Testis (tissue), 5 donors: ENCODE measurements at regions of chr1 and their contacts with region 1.

Region 1: GRCh38 chr1:203216274-203217138 is 13.0 kb downstream of the CHIT1 start:
- DNase-seq: peak; percentile 78
- H3K4me3 ChIP-seq: no peak overlapping the region
- H3K27ac ChIP-seq: no peak overlapping the region
- H3K4me1 ChIP-seq: no peaks in the 10 kb centered on the region
- H3K27me3 ChIP-seq: no peaks in the 10 kb centered on the region
- CTCF ChIP-seq: peak; percentile 69 to 81 (median 71)
- POLR2A ChIP-seq: no peak

Region 2: GRCh38 chr1:203038891-203039608 is 177.5 kb before region 1 on chr1:
- intact Hi-C with region 1: loop called (anchors 2 kb)
- DNase-seq: peak; percentile 90
- H3K4me3 ChIP-seq: no peak overlapping the region
- H3K27ac ChIP-seq: no peak overlapping the region
- H3K4me1 ChIP-seq: no peaks in the 10 kb centered on the region
- H3K27me3 ChIP-seq: no peaks in the 10 kb centered on the region
- CTCF ChIP-seq: peak; percentile 83 to 90 (median 83)
- POLR2A ChIP-seq: no peak

Region 3: DNA sequence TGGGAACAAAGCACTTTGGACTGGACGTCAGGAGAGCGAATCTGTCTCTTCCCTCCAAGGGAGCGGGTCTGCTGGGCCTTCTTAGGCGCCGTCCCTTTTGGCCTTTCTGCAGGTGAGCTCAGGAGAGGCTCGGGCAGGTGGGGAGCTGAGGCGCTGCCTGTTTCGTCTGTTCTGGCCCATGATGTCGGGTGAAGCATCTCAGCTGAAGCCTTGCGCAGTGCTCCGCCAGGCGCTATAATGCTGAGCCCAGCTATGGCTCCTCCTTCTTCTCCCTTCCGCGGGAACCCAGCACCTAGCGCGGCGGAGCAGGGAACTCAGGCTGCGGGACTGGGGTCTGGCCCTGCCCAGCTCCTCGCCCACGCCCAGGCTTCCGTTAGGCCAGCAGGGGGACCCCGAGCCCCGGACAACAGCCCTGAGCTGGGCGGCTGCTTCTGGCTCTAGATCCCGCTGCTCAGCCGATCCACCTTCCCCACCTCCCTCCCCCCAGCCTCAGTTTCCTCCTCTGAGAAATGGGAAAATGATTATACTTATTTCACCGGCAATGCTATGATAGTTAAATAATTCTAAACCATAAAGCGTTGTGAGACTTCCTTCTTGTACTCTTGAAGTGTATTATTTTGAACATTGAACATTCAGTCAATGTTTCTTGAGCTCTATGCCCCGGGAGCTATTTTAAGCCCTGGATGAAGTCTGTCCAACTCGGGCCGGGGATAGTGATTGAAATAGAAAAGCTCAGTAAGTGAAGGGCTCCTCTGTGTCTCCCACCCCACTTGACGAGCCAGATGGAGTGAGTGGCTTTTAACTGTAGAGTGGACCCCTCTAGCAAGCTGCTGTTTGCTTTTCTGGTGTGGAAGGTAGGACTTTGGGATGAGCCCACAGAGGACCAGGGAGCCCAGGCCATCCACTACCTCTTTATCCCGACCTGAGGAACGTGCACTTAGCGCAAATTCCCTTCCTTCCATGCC is 98.6 kb before region 1 on chr1:
- intact Hi-C with region 1: loop called (anchors 5 kb)
- DNase-seq: peak; percentile 83
- H3K4me3 ChIP-seq: no peak overlapping the region
- H3K27ac ChIP-seq: no peak overlapping the region
- H3K4me1 ChIP-seq: no peaks in the 10 kb centered on the region
- H3K27me3 ChIP-seq: no peaks in the 10 kb centered on the region
- CTCF ChIP-seq: peak; percentile 72 to 74 (median 74)
- POLR2A ChIP-seq: no peak

Region 4: DNA sequence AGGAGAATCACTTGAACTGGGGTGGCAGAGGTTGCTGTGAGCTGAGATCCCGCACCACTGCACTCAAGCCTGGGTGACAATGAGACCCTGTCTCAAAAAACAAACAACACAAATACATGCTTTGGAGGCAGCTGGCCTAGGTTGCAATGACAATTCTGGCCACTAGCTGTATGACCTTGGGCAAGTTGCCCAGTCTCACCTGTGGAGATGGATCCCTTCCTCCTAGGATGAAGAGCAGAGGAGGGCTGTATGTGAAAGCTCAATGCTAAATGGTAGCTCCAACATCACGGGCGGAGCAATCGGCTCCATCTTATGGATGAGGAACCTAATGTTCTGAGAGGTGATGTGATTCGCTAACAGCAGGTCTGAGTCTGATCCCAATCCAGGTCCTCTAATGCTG is 68.4 kb before region 1 on chr1:
- intact Hi-C with region 1: no loop called
- DNase-seq: no peak
- H3K4me3 ChIP-seq: no peak overlapping the region
- H3K27ac ChIP-seq: no peak overlapping the region
- H3K4me1 ChIP-seq: peaks cover 71% of the 10 kb centered on the region
- H3K27me3 ChIP-seq: no peaks in the 10 kb centered on the region
- CTCF ChIP-seq: peak in 2 of 3 experiments; percentile 22 to 32
- POLR2A ChIP-seq: no peak

Region 5: DNA sequence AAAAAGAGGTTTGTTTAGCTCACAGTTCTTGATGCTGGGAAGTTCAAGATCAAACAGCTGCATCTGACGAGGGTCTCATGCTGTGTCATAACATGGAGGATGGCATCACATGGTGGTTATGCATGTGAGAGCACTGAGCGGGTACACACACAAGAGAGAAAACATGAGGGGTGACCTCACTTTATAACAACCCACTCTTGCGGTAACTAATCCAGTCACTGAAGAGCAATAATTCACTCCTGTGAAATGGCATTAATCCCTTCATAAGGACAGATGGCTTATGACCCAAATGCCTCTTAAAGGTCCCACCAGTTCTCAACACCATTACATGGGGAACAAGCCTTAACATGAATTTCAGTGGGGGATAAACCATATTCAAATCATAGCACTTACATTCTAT is 36.2 kb after region 1 on chr1:
- intact Hi-C with region 1: no loop called
- DNase-seq: no peak
- H3K4me3 ChIP-seq: no peak overlapping the region
- H3K27ac ChIP-seq: no peak overlapping the region
- H3K4me1 ChIP-seq: no peaks in the 10 kb centered on the region
- H3K27me3 ChIP-seq: no peaks in the 10 kb centered on the region
- CTCF ChIP-seq: no peak
- POLR2A ChIP-seq: no peak

Region 6: GRCh38 chr1:203549309-203549708 is 332.8 kb after region 1 on chr1:
- intact Hi-C with region 1: no loop called
- DNase-seq: no peak
- H3K4me3 ChIP-seq: no peak overlapping the region
- H3K27ac ChIP-seq: no peak overlapping the region
- H3K4me1 ChIP-seq: peaks cover 10% of the 10 kb centered on the region
- H3K27me3 ChIP-seq: no peaks in the 10 kb centered on the region
- CTCF ChIP-seq: no peak
- POLR2A ChIP-seq: no peak